Ascending aorta (tissue), 2 donors: ENCODE measurements at regions of chr5 and their contacts with region 1.

Region 1: DNA sequence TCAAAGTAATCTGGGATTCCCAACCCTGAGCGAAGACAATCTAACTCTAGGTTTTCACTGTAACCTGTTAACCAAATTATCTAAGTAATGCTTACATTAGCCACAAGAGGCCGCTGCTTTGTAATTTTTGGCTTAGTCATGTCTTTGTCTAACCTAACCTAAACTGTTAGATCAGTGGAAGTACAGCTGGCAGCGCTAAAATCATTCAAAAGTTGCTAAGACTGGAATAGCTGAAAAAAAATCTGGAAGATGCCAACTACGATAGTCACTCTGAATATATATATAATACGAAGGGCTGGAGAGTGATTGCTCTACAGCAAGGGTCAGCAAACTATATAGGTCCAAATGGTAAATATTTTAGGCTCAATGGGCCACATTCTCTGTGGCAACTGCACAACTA is 60.2 kb downstream of the FBXO38 start:
- DNase-seq: peak in 1 of 2 donors; percentile 69
- H3K4me3 ChIP-seq: no peak overlapping the region
- H3K27ac ChIP-seq: no peak overlapping the region
- H3K4me1 ChIP-seq: no peaks in the 10 kb centered on the region
- H3K27me3 ChIP-seq: no peaks in the 10 kb centered on the region
- CTCF ChIP-seq: peak; percentile 65 to 69 (median 67)

Region 2: GRCh38 chr5:148179234-148179824 is 264.7 kb before region 1 on chr5:
- intact Hi-C with region 1: loop called (anchors 5 kb)
- DNase-seq: no peak
- H3K4me3 ChIP-seq: no peak overlapping the region
- H3K27ac ChIP-seq: no peak overlapping the region
- H3K4me1 ChIP-seq: no peaks in the 10 kb centered on the region
- H3K27me3 ChIP-seq: no peaks in the 10 kb centered on the region
- CTCF ChIP-seq: peak; percentile 21 to 60 (median 36)

Region 3: DNA sequence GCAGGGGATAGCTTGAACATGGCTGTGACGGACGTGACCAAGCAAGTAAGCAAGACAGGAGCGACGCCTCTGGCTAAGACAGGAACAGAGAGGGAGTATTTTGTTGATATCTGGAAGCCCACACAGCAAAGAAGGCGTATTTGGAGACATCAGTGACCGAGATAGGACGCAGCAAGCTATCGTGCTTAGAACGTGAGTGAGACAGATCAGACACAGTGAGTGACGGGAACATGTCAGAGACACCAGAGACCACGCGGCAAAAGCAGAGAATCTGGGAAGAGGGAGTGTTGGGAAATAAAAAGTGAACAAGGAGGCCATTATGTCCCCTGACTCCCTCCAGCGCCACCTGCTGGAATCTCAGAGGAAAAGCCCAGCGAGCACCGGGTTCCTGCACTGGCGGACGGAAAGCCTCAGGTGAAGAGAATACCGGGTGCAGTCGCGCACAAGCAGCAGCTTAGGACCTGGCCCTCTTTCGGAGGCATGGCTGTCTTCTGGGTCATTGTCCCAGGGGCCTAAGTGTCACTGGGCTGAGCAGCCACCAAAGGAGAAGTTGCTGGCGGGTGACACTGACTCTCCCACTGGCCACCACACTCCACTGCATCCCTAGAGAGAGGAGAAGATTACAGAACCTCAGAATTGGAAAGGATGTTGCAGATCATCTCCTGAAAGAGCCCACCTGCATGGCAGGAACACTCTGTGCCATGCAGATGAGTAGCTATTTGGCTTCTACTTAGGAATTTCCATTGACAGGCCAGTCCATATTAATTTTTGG is 38.9 kb after region 1 on chr5:
- intact Hi-C with region 1: loop called (anchors 2 kb)
- DNase-seq: peak in 1 of 2 donors; percentile 67
- H3K4me3 ChIP-seq: no peak overlapping the region
- H3K27ac ChIP-seq: no peak overlapping the region
- H3K4me1 ChIP-seq: no peaks in the 10 kb centered on the region
- H3K27me3 ChIP-seq: no peaks in the 10 kb centered on the region
- CTCF ChIP-seq: peak; percentile 30 to 68 (median 60)

Region 4: GRCh38 chr5:149035372-149035790 is 591.4 kb after region 1 on chr5:
- intact Hi-C with region 1: loop called (anchors 5 kb)
- DNase-seq: peak in 1 of 2 donors; percentile 85
- H3K4me3 ChIP-seq: no peak overlapping the region
- H3K27ac ChIP-seq: no peak overlapping the region
- H3K4me1 ChIP-seq: no peaks in the 10 kb centered on the region
- H3K27me3 ChIP-seq: no peaks in the 10 kb centered on the region
- CTCF ChIP-seq: peak; percentile 67 to 83 (median 80)

Region 5: GRCh38 chr5:149114403-149115312 is 670.7 kb after region 1 on chr5:
- intact Hi-C with region 1: loop called (anchors 2 kb)
- DNase-seq: no peak
- H3K4me3 ChIP-seq: no peak overlapping the region
- H3K27ac ChIP-seq: no peak overlapping the region
- H3K4me1 ChIP-seq: no peaks in the 10 kb centered on the region
- H3K27me3 ChIP-seq: no peaks in the 10 kb centered on the region
- CTCF ChIP-seq: peak; percentile 57 to 71 (median 60)